GM23248 (cell line): ENCODE measurements at regions of chr1 and their contacts with region 1.

Region 1: GRCh38 chr1:232630047-232630893 is at the start of gene SIPA1L2:
- DNase-seq: peak; percentile 95
- H3K4me3 ChIP-seq: peak within 1 kb of the TSS; percentile 86
- H3K27ac ChIP-seq: peak within 1 kb of the TSS; percentile 41
- H3K4me1 ChIP-seq: peaks cover 13% of the 10 kb centered on the region
- H3K27me3 ChIP-seq: no peaks in the 10 kb centered on the region
- total RNA-seq, gene SIPA1L2: 4.4 and 5.9 TPM in 2 replicates

Region 2: DNA sequence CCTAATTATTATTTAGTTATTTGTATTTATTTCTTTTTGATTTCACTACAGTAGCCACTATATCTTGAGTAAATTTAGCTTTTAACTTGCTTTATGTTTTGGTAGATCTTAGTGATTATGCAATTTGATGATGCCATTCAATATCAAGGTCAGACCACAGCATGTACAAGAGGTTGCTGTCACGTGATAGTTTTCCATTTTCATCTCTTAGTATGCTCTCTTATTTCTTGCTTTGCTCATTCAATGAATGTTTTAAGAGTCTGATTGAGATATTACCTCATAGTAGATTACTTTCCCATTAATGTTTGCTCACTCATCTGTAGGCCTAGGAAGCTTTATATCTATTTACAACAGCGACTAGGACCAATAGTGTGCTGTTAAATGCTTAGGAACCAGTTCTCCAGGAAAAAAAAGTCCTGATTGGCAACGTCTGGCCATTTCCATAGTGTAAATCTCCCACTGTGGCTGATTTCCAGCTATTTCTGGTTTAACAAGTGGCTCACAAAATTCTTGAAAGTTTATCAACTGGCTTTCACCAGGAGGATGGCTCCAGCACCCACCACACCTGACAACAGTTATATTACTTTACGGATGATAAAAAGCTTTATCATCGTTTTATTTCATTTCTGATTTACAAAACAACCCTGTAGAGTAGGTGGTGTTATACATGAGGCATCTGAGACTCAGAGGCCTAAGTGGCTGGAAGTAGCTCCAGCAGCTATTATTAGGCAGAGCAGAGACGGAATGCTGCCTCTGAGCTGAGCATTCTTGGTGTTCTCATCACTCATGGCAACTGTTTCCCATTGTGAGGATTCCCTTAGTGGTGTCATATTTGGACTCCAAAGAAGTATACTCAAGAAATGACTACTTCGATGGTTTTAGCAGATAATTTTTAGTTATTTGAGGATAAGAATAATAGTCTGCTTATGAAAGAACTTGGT is 768.5 kb before region 1 on chr1:
- in situ Hi-C with region 1: no loop called
- DNase-seq: peak; percentile 88
- H3K4me3 ChIP-seq: no peak overlapping the region
- H3K27ac ChIP-seq: peak overlapping the region; percentile 69
- H3K4me1 ChIP-seq: peaks cover 14% of the 10 kb centered on the region
- H3K27me3 ChIP-seq: no peaks in the 10 kb centered on the region

Region 3: GRCh38 chr1:231872461-231872910 is 757.8 kb before region 1 on chr1:
- in situ Hi-C with region 1: loop called (anchors 5 kb)
- DNase-seq: peak; percentile 70
- H3K4me3 ChIP-seq: no peak overlapping the region; the same call in 1 of the 2 replicates
- H3K27ac ChIP-seq: peak overlapping the region; percentile 6
- H3K4me1 ChIP-seq: peaks cover 16% of the 10 kb centered on the region
- H3K27me3 ChIP-seq: no peaks in the 10 kb centered on the region

Region 4: DNA sequence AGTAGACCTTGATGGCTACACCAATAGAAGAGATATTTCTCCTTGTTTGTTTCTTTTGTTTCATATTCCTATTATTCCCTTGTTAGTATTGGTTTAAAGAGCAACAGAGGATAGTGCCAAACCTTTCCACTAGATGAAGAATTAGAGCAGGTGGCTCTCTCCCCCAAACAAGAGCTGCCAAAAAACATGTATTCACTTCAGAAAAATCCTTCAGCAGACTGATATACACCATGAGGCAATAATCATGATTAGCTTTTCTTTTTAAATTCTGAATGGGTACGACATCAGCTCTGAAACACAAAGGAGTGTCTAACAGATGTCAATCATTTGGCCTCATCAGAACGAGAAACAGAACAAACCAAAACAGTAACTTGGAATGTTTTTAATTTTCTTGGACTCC is 107.6 kb after region 1 on chr1:
- in situ Hi-C with region 1: no loop called
- DNase-seq: no peak
- H3K4me3 ChIP-seq: no peak overlapping the region
- H3K27ac ChIP-seq: no peak overlapping the region
- H3K4me1 ChIP-seq: no peaks in the 10 kb centered on the region
- H3K27me3 ChIP-seq: no peaks in the 10 kb centered on the region

Region 5: DNA sequence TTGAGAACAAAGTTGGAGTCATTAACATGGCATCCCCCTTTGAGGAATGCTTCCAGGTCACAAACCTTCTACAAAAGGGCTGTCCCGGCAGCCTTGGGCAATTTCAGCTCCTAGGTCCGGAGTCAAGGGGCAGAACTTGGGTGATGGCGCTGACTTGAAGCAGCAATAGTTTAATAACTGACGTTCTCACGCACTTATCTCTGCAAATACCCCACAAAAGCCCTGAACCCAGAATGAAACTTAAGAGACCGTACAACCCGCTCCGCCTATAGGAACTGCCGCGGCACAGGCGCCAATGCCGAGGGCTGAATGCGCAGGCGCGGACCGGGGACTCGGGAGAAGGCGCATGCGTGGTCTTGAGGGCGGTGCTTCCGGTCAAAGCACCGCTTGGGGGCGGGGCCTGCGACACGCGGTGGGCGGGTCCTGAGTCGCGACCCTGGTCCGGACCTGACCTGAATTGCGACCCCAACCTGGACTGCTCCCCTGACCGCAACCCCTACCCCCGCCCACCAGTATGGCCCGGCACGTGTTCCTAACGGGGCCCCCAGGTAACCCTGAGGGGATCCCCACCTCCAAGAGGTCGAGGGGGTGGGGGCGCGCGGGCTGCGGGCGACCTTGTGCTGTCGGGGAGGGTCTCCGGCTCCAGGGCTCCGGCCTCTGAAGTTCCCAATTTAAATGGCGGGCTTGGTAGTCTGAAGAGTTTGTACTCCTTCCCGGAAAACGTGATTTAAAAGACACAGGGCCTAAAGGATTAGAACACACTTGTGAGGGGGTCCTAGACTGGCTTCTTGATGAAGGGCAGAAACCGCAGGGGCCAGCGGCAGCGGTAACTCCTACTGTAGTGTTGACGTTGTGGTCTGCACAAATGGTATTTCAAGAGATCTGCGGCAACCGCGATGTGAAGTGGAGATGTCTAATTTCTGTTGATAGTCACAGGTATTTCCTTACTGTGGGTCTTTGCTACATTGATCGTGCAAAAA is 320.2 kb after region 1 on chr1 and contains the start of gene NTPCR:
- in situ Hi-C with region 1: loop called (anchors 10 kb)
- DNase-seq: peak; percentile 98
- H3K4me3 ChIP-seq: peak within 1 kb of the TSS; percentile 92
- H3K27ac ChIP-seq: peak within 1 kb of the TSS; percentile 52
- H3K4me1 ChIP-seq: peaks cover 21% of the 10 kb centered on the region
- H3K27me3 ChIP-seq: no peaks in the 10 kb centered on the region
- total RNA-seq, gene NTPCR: 23.8 and 47.0 TPM in 2 replicates

Region 6: GRCh38 chr1:233238884-233239431 is 608.7 kb after region 1 on chr1:
- in situ Hi-C with region 1: loop called (anchors 10 kb)
- DNase-seq: no peak
- H3K4me3 ChIP-seq: no peak overlapping the region
- H3K27ac ChIP-seq: no peak overlapping the region
- H3K4me1 ChIP-seq: 0 out of 2 replicates have a peak, but pooled peaks cover 8% of the 10 kb centered on the region
- H3K27me3 ChIP-seq: no peaks in the 10 kb centered on the region